Psoas muscle (tissue), 8 donors: ENCODE measurements at regions of chr4 and their contacts with region 1.

Region 1: GRCh38 chr4:48269861-48270522 is 354 bp upstream of the TEC start:
- DNase-seq: peak; percentile 94 to 95
- ATAC-seq: peak; percentile 98
- H3K4me3 ChIP-seq: peak overlapping the region; percentile 82
- H3K27ac ChIP-seq: peak overlapping the region; percentile 90
- H3K4me1 ChIP-seq: peaks cover 6% of the 10 kb centered on the region
- H3K27me3 ChIP-seq: no peaks in the 10 kb centered on the region
- CTCF ChIP-seq: peak; percentile 12

Region 2: DNA sequence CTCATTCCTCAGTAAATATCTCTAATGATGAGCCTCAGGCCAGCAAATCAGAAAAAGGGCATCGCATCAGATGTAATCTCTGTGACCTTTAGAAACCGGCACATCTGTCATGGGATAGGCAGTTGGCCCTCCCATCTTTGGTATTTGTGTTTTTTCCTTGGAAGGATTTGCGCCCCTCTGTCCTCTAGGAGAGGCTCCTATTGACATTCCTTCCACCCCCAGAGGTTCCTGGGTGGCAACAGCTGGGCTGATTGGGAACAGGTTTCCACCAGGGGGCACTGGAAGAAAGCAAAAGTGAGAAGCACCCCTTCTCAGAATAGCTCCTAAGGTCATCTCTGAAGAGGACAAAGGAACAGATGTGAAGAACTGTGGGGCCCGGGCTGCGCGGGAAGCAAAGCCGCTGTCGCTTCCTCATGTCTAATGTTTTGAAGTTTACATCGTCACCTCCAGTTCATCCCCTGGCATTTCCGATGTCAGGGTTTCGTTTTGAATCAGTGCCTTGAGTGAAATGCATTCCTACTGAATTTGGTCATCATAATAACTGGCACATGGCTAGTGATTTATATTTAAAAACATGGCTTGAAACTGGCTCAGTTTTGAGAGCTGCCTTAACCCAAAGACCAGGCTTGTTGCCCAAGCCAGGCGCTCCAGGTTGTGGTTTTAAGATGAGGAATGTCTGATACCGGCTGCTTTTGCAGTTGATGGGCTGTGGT is 142.2 kb before region 1 on chr4:
- intact Hi-C with region 1: no loop called
- DNase-seq: peak in 1 of 2 donors; percentile 55
- ATAC-seq: peak; percentile 77 to 92 (median 85)
- H3K4me3 ChIP-seq: peak overlapping the region; percentile 40
- H3K27ac ChIP-seq: no peak overlapping the region
- H3K4me1 ChIP-seq: peaks cover 11% of the 10 kb centered on the region
- H3K27me3 ChIP-seq: peaks cover 0 to 5% (median 0%) of the 10 kb centered on the region in 3 donors
- CTCF ChIP-seq: peak; percentile 50

Region 3: DNA sequence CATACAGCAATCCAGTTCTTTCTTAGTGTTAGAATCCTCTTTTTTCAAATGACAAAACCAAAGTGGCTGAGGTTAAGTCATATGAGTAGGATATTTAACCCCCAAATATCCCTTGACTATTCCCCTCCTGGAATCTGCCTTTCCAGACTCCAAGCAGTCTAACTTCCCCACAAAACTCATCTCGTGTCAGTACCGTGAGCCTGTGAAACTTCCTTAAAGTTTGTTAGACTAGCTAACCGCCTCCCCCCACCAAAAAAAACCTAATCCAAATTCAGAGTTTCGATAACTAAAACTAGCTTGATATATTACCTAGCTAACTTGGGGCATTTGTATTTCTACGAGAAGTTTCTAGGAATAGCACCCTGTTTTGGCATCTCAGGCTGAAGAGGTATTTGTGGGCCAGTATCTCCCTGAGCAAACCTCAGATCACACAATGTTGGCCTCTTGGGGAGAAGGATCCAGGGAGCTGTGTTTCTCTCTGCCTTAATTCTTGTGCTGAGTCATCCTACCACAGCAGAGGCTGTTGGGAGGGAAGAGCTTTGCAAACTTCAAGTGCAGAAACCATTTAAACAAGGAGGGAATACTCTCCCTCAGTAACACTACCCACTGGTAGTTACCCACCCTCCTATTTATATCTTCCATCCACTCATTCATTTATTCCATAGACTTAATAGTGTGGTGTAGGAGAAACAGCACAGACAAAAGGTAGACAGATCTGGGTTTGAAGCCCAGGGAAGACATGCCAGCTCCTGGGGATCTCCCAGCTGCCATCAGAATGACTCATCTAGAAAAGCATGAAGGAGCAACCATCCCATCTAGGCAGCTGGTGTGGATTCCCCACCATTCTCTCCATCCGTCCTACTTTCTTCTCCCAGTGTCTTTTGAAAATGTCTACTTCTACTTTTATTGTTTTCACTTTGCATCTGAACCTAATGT is 96.7 kb before region 1 on chr4:
- intact Hi-C with region 1: loop called in 1 of 2 experiments (anchors 10 kb)
- DNase-seq: no peak
- ATAC-seq: peak in 3 of 4 donors; percentile 64 to 84 (median 67)
- H3K4me3 ChIP-seq: no peak overlapping the region
- H3K27ac ChIP-seq: peak overlapping the region; percentile 46
- H3K4me1 ChIP-seq: peaks cover 16% of the 10 kb centered on the region
- H3K27me3 ChIP-seq: no peaks in the 10 kb centered on the region
- CTCF ChIP-seq: no peak

Region 4: GRCh38 chr4:48227659-48228058 is 42.3 kb before region 1 on chr4:
- intact Hi-C with region 1: no loop called
- DNase-seq: no peak
- ATAC-seq: no peak
- H3K4me3 ChIP-seq: no peak overlapping the region
- H3K27ac ChIP-seq: no peak overlapping the region
- H3K4me1 ChIP-seq: no peaks in the 10 kb centered on the region
- H3K27me3 ChIP-seq: no peaks in the 10 kb centered on the region
- CTCF ChIP-seq: no peak

Region 5: DNA sequence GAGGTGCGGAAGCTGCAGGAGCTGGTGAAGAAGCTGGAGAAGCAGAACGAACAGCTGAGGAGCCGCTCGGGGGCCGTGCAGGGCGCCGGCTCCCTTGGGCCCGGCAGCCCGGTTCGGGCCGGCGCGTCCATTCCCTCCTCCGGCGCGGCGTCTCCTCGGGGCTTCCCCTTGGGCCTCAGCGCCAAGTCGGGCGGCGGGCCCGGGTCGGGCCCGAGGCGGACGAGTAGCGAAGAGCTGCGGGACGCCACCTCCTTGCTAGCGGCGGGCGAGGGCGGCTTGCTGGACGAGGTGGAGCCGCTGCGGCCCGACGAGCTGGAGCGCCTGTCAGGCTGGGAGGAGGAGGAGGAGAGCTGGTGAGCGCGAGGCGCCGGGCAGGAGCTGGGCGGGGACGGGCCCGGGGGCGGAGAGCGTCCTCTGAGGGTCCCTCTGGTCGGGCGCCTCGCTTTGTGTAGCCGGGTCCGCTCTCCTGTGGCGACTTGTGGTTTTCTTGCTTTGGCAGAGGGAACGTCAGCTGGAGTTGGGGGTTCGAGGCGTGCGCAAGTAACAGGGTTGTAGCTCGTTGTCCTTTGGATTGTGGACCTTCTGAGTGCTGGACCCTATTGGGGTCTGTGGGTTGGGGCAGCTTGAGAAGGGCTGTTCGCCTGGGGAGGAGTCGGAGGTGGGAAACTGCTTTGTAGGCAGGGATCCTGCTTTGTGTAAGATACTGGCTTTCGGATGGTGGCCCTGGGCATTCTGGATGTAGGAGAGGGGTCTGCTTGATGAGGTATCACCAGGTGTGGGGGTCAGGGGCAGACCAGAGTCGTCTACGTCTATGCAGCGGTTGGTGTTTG is 72.0 kb after region 1 on chr4:
- intact Hi-C with region 1: no loop called
- DNase-seq: peak; percentile 60 to 79
- ATAC-seq: peak; percentile 26 to 50 (median 39)
- H3K4me3 ChIP-seq: peak overlapping the region; percentile 95
- H3K27ac ChIP-seq: peak overlapping the region; percentile 98
- H3K4me1 ChIP-seq: peaks cover 63% of the 10 kb centered on the region
- H3K27me3 ChIP-seq: no peaks in the 10 kb centered on the region
- CTCF ChIP-seq: no peak